ENCODE measurements at regions of chr18 and their contacts with region 1.

Region 1: DNA sequence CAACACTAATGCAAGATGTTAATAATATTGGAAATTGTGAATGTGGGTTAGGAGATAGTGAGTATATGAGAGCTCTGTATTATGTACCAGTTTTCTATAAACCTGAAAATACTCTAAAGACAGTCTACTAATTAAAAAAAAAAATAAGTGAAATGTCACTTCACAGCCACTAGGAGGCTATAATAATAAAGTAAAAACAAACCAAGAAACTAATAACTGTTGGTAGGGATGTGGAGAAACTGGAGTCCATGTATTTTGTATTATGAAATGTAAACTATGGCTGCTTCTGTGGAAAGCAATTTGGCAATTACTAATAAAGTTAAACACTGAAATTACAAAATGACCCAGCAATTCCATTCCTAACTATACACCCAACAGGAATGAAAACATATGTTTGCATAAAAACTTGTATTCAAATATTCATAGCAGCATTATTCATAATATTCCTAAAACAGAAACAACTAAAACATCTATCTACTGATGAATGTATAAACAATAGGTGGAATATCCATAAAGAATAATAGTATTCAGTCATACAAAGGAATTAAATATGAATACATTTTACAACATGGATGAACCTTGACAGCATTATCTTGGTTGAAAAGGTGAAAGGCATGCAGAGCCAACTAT is 36.2 kb downstream of the CCDC178 start:
- DNase-seq: no peak
- ATAC-seq: no peak
- H3K4me3 ChIP-seq: no peak overlapping the region
- H3K27ac ChIP-seq: no peak overlapping the region
- H3K4me1 ChIP-seq: no peaks in the 10 kb centered on the region
- H3K27me3 ChIP-seq: no peaks in the 10 kb centered on the region
- CTCF ChIP-seq: peak; percentile 31
- POLR2A ChIP-seq: no peak
- RAD21 ChIP-seq: no peak

Region 2: DNA sequence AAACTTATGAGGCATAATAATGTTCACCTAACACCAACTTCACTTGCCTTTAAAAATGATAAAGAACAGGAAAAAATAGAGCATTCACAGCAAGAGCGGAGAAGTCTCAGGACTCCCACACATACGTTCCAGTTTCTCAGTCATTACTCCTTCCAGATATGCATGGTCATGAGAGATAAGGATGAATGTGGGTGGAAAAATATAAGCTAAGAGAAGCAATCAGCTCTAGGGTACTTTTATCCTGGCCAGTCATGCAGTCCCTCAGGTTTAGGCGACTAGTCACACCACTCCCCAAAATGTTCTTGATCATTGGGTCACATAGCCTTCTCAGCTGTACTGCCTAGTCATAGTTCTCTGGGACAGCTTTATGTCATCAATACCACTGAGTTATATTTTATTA is 65.3 kb after region 1 on chr18:
- CTCF ChIA-PET with region 1: no interaction called
- POLR2A ChIA-PET with region 1: no interaction called
- dilution Hi-C with region 1: no loop called
- in situ Hi-C with region 1: no loop called
- intact Hi-C with region 1: loop called (anchors 10 kb)
- DNase-seq: no peak
- ATAC-seq: no peak
- H3K4me3 ChIP-seq: no peak overlapping the region
- H3K27ac ChIP-seq: no peak overlapping the region
- H3K4me1 ChIP-seq: no peaks in the 10 kb centered on the region
- H3K27me3 ChIP-seq: no peaks in the 10 kb centered on the region
- CTCF ChIP-seq: no peak
- POLR2A ChIP-seq: no peak
- RAD21 ChIP-seq: no peak

Measured in IMR-90 (cell line).